A549 (cell line): ENCODE measurements at regions of chr3 and their contacts with region 1.

Region 1: GRCh38 chr3:12841149-12841970 is at the start of gene RPL32:
- DNase-seq: peak; percentile 84 to 96
- ATAC-seq: peak; percentile 88 to 94
- H3K4me3 ChIP-seq: peak within 1 kb of the TSS; percentile 98
- H3K27ac ChIP-seq: peak within 1 kb of the TSS; percentile 95 to 97
- H3K4me1 ChIP-seq: peaks cover 33% of the 10 kb centered on the region
- CTCF ChIP-seq: peak; percentile 84
- EP300 ChIP-seq: no peak
- POLR2A ChIP-seq: peak; percentile 97
- RAD21 ChIP-seq: no peak; a peak in 1 of 5 replicates
- polyA plus RNA-seq, gene RPL32: 2,852 and 3,429 TPM in 2 replicates

Region 2: GRCh38 chr3:12670365-12671119 is 170.8 kb before region 1 on chr3:
- CTCF ChIA-PET with region 1: no interaction called
- POLR2A ChIA-PET with region 1: no interaction called
- DNase-seq: no peak
- ATAC-seq: peak; percentile 33 to 53; a peak in 5 of 6 replicates
- H3K4me3 ChIP-seq: no peak overlapping the region
- H3K27ac ChIP-seq: no peak overlapping the region
- H3K4me1 ChIP-seq: peaks cover 7% of the 10 kb centered on the region; the same call in 1 of the 3 replicates
- CTCF ChIP-seq: no peak
- EP300 ChIP-seq: no peak
- POLR2A ChIP-seq: no peak
- RAD21 ChIP-seq: no peak

Region 3: GRCh38 chr3:12810013-12810780 is 31.2 kb before region 1 on chr3:
- CTCF ChIA-PET with region 1: interaction called, 14 read pairs
- POLR2A ChIA-PET with region 1: interaction called, 11 read pairs
- DNase-seq: peak; percentile 90 to 91
- ATAC-seq: peak; percentile 89 to 97
- H3K4me3 ChIP-seq: peak overlapping the region; percentile 52
- H3K27ac ChIP-seq: peak overlapping the region; percentile 63 to 83
- H3K4me1 ChIP-seq: peaks cover 11% of the 10 kb centered on the region
- CTCF ChIP-seq: peak; percentile 42
- EP300 ChIP-seq: no peak
- POLR2A ChIP-seq: peak; percentile 85
- RAD21 ChIP-seq: peak; percentile 34 to 49; a peak in 3 of 5 replicates

Region 4: DNA sequence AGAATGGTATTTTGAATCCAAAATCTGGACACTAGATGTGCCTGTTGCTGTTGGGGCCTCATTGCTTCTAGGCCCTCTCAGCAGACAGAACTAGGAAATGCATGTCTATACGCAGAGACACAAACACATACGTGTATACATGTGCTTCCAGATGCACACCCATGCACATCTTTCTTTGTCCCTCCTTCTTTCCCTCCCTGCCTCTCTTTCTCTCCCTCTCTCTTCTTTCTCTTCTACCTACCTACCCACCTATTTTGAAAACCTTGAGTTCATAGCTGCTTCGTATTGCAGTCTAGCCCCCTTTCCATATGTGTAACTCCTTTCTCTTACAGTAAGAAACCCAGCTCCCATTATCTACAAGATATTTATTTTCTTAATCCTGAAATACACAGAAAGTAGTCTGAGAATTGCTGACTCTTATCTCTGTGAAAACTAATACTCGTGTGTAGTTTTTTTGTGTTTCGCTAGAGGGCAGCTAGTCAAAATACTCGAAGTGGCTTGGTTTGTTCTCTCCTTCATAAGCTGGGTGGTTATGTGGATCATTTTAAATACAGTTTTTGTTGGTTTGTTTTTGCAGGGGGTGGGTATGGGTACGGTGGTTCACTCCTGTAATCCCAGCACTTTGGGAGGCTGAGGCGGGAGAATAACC is 18.5 kb before region 1 on chr3:
- CTCF ChIA-PET with region 1: interaction called, 13 read pairs
- POLR2A ChIA-PET with region 1: interaction called, 3 read pairs
- DNase-seq: peak; percentile 53 to 54
- ATAC-seq: peak in 1 of 2 experiments; percentile 80; a peak in 4 of 6 replicates
- H3K4me3 ChIP-seq: no peak overlapping the region
- H3K27ac ChIP-seq: no peak overlapping the region
- H3K4me1 ChIP-seq: no peaks in the 10 kb centered on the region
- CTCF ChIP-seq: peak; percentile 56
- EP300 ChIP-seq: no peak
- POLR2A ChIP-seq: no peak
- RAD21 ChIP-seq: peak in 1 of 2 experiments; percentile 32; a peak in 1 of 5 replicates

Region 5: DNA sequence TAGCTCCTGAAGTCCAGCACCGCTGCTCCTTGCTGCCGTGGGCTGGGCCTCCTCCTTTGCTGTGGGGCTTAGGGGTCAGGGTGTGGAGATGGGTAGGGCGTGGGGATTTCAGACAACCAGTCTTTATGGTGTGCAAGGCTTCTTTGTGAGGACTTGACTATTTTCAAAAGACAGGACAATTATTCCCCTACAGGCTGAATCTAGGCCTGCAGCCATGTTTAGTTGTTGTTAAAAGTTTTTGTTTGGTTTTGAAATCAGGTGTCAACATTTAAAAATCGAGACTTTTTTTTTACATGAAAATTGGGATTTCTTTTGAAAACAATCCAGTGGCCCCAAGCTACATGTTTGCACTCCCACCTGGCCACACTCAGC is 10.6 kb before region 1 on chr3:
- CTCF ChIA-PET with region 1: interaction called, 47 read pairs
- POLR2A ChIA-PET with region 1: interaction called, 20 read pairs
- DNase-seq: no peak
- ATAC-seq: peak; percentile 23 to 39; a peak in 5 of 6 replicates
- H3K4me3 ChIP-seq: no peak overlapping the region
- H3K27ac ChIP-seq: no peak overlapping the region; a peak in 1 of 6 replicates
- H3K4me1 ChIP-seq: peaks cover 24% of the 10 kb centered on the region
- CTCF ChIP-seq: no peak
- EP300 ChIP-seq: no peak
- POLR2A ChIP-seq: no peak
- RAD21 ChIP-seq: no peak

Region 6: DNA sequence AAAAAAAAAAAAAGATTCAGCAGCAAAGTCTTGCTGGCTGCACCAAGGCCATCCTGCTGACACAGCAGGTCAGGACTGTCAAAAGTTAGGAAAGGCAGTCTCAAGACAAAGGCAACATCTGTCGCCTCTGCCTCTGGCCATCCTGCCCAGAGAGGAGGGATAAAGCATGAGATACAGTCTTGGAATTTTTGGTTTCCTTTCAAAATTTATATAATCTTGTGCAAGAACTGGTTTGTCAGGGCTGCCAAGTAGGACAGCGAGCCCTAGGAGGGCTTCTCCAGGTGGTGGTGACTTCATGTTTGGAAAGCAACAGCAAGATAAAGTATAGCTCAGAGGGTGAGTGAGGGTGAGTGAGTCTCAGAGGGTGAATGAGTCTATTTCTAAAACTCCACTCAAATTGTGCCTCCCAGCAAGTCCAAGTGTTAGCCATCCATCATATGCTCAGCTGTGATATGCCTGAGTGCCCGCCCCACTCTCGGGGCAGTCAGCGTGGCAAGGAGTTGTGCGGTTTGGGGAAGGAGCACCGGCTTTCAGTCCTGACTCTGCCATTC is 11.9 kb after region 1 on chr3:
- CTCF ChIA-PET with region 1: interaction called, 20 read pairs
- POLR2A ChIA-PET with region 1: interaction called, 3 read pairs
- DNase-seq: no peak
- ATAC-seq: no peak
- H3K4me3 ChIP-seq: no peak overlapping the region
- H3K27ac ChIP-seq: no peak overlapping the region
- H3K4me1 ChIP-seq: no peaks in the 10 kb centered on the region
- CTCF ChIP-seq: no peak
- EP300 ChIP-seq: no peak
- POLR2A ChIP-seq: no peak
- RAD21 ChIP-seq: no peak

Region 7: GRCh38 chr3:12861611-12862010 is 20.3 kb after region 1 on chr3:
- CTCF ChIA-PET with region 1: interaction called, 21 read pairs
- POLR2A ChIA-PET with region 1: interaction called, 3 read pairs
- DNase-seq: no peak
- ATAC-seq: no peak
- H3K4me3 ChIP-seq: no peak overlapping the region
- H3K27ac ChIP-seq: no peak overlapping the region
- H3K4me1 ChIP-seq: no peaks in the 10 kb centered on the region
- CTCF ChIP-seq: no peak
- EP300 ChIP-seq: no peak
- POLR2A ChIP-seq: no peak
- RAD21 ChIP-seq: no peak

Region 8: GRCh38 chr3:12868039-12869034 is 27.0 kb after region 1 on chr3:
- CTCF ChIA-PET with region 1: interaction called, 21 read pairs
- POLR2A ChIA-PET with region 1: interaction called, 3 read pairs
- DNase-seq: peak; percentile 85 to 88
- ATAC-seq: peak; percentile 95 to 97
- H3K4me3 ChIP-seq: no peak overlapping the region
- H3K27ac ChIP-seq: no peak overlapping the region
- H3K4me1 ChIP-seq: peaks cover 4% of the 10 kb centered on the region; the same call in 2 of the 3 replicates
- CTCF ChIP-seq: peak; percentile 87
- EP300 ChIP-seq: no peak
- POLR2A ChIP-seq: no peak
- RAD21 ChIP-seq: peak; percentile 80 to 87

Region 9: DNA sequence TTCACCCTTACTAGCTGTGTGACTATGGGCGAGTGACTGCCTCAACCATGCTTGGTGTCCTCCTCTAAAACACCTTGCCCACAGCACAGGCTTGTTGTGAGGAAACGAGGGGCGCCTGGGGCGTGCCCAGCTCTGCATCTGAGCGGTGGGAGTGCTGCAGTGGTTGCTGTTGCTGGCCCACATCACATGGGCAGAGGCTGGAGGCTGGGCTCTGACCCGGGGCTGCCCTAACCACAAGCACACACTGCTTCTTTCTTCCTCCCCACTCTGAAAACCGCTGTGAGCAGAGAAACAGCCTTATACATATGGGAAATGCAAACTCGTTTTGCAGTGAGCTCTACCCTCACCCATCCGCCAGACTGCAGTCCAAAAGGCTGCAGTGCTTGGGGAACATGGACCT is 74.8 kb after region 1 on chr3:
- CTCF ChIA-PET with region 1: no interaction called
- POLR2A ChIA-PET with region 1: no interaction called
- DNase-seq: no peak
- ATAC-seq: no peak
- H3K4me3 ChIP-seq: no peak overlapping the region
- H3K27ac ChIP-seq: no peak overlapping the region
- H3K4me1 ChIP-seq: no peaks in the 10 kb centered on the region
- CTCF ChIP-seq: no peak
- EP300 ChIP-seq: no peak
- POLR2A ChIP-seq: no peak
- RAD21 ChIP-seq: no peak

Region 10: GRCh38 chr3:13141991-13142412 is 300.6 kb after region 1 on chr3:
- CTCF ChIA-PET with region 1: no interaction called
- POLR2A ChIA-PET with region 1: no interaction called
- DNase-seq: no peak
- ATAC-seq: peak in 1 of 2 experiments; percentile 59; a peak in 3 of 6 replicates
- H3K4me3 ChIP-seq: no peak overlapping the region
- H3K27ac ChIP-seq: no peak overlapping the region
- H3K4me1 ChIP-seq: no peaks in the 10 kb centered on the region
- CTCF ChIP-seq: no peak
- EP300 ChIP-seq: no peak
- POLR2A ChIP-seq: no peak
- RAD21 ChIP-seq: no peak